ENCODE measurements at regions of chr10 and their contacts with region 1.

Region 1: DNA sequence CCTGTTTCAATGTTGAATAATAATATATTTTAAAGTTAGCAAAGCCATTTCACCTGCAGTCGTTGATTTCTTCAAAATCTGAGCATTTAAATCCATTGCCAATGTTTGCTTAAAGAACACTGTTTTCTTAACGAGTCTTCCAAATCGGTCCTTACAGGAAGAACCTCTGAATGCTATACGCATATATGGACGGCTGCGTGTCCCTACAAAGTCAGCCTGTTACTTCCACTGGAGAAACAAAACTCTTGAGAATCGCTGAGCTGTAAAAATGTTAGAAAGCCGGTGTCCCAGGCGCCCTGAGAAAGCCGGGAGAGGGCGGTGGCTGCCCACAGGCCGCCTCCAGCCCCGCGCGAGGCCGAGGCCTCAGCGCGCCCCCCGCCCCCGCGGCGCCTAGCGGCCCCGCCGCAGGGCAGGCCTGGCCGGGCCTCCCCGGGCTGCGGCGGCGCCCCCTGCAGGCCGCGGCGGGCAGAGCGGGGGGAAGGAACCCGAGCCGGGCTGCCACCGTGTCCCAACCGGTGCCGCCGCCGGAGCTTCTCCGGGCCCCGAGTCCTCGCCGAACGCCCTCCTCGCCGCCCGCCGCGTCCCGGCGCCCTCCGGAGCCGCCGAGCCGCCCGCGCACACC is at the start of gene FHIP2A:
- DNase-seq: peak; percentile 86
- H3K4me3 Mint-ChIP-seq: peak within 1 kb of the TSS; percentile 82
- H3K27ac Mint-ChIP-seq: peak within 1 kb of the TSS; percentile 86
- H3K4me1 Mint-ChIP-seq: peaks cover 31% of the 10 kb centered on the region
- H3K27me3 Mint-ChIP-seq: no peaks in the 10 kb centered on the region
- total RNA-seq, gene FHIP2A: 17.2 to 21.4 TPM

Region 2: GRCh38 chr10:114173921-114174694 is 647.3 kb before region 1 on chr10 and contains the start of gene CCDC186:
- CTCF ChIA-PET with region 1: no interaction called
- POLR2A ChIA-PET with region 1: no interaction called
- intact Hi-C with region 1: loop called (anchors 1 kb)
- DNase-seq: peak; percentile 99
- H3K4me3 Mint-ChIP-seq: peak within 1 kb of the TSS; percentile 93
- H3K27ac Mint-ChIP-seq: peak within 1 kb of the TSS; percentile 91
- H3K4me1 Mint-ChIP-seq: peaks cover 33% of the 10 kb centered on the region
- H3K27me3 Mint-ChIP-seq: no peaks in the 10 kb centered on the region
- total RNA-seq, gene CCDC186: 12.6 to 13.8 TPM

Region 3: DNA sequence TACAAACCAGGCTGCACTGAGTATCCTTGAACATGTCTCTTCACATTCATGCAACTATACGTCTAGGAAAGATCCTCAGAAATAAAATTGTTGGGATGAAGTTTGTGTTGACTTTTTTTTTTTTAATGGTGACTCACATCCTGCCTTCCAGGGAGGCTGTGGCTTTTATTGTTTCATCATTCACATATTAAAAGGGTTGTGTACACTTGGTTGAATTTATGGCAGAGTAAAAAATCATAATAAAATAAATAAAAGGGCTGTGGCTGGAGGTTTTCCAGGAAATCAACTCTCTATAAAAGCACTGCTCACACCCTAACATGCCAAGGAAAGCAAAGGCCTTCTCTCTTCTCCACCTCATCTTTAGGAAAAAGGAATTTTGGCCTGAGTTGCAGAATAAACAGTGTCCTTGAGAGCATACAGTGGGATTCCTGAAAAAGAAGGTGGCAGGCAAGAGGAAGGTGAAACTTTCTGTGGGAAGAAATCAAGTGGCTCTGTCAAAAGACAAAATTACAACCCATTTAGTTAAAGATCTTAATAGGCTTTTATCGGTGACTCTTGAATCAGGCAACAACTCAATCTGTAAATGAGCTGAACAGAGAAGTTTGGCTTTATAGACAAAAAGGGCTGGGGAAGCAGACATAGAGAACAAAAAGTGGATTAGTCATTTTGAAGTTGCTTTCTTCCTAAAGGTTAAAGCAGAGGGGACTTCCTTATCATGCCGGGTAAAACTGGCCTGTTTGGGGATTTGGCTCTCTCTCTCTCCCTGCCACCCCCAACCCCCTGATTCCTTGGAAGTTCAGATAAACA is 41.4 kb before region 1 on chr10:
- CTCF ChIA-PET with region 1: interaction called, 10 read pairs
- POLR2A ChIA-PET with region 1: no interaction called
- intact Hi-C with region 1: no loop called
- DNase-seq: no peak
- H3K4me3 Mint-ChIP-seq: no peak overlapping the region
- H3K27ac Mint-ChIP-seq: no peak overlapping the region
- H3K4me1 Mint-ChIP-seq: peaks cover 7% of the 10 kb centered on the region
- H3K27me3 Mint-ChIP-seq: no peaks in the 10 kb centered on the region

Region 4: DNA sequence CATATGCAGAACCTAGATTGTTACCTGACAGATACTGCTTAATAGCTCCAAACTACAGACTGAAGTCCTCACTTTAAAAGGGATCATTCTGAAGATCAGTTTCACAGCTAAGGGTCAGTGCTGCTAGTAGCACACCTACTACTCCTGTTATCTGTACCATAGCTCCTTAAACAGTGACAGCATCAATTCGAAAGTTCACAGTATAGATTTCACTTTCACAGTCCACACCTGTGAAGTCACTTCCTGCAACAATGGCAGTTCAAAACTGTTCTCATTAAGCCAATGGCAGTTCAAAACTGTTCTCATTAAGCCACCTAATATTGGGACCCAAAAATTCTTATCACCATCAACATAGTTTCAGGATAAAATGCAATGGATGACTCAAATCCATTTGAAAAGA is 10.5 kb before region 1 on chr10:
- CTCF ChIA-PET with region 1: interaction called, 17 read pairs
- POLR2A ChIA-PET with region 1: interaction called, 8 read pairs
- intact Hi-C with region 1: no loop called
- DNase-seq: no peak
- H3K4me3 Mint-ChIP-seq: no peak overlapping the region
- H3K27ac Mint-ChIP-seq: no peak overlapping the region
- H3K4me1 Mint-ChIP-seq: peaks cover 21% of the 10 kb centered on the region
- H3K27me3 Mint-ChIP-seq: no peaks in the 10 kb centered on the region

Region 5: GRCh38 chr10:114915294-114915693 is 93.9 kb after region 1 on chr10:
- CTCF ChIA-PET with region 1: interaction called, 10 read pairs
- POLR2A ChIA-PET with region 1: interaction called, 5 read pairs
- intact Hi-C with region 1: no loop called
- DNase-seq: no peak
- H3K4me3 Mint-ChIP-seq: no peak overlapping the region
- H3K27ac Mint-ChIP-seq: no peak overlapping the region
- H3K4me1 Mint-ChIP-seq: peaks cover 11% of the 10 kb centered on the region
- H3K27me3 Mint-ChIP-seq: peaks cover 1% of the 10 kb centered on the region

Measured in activated CD4-positive, alpha-beta memory T cell treated with anti-CD3 and anti-CD28 coated beads for 36 hours (primary cell).